ENCODE measurements at regions of chr16 and their contacts with region 1.

Region 1: DNA sequence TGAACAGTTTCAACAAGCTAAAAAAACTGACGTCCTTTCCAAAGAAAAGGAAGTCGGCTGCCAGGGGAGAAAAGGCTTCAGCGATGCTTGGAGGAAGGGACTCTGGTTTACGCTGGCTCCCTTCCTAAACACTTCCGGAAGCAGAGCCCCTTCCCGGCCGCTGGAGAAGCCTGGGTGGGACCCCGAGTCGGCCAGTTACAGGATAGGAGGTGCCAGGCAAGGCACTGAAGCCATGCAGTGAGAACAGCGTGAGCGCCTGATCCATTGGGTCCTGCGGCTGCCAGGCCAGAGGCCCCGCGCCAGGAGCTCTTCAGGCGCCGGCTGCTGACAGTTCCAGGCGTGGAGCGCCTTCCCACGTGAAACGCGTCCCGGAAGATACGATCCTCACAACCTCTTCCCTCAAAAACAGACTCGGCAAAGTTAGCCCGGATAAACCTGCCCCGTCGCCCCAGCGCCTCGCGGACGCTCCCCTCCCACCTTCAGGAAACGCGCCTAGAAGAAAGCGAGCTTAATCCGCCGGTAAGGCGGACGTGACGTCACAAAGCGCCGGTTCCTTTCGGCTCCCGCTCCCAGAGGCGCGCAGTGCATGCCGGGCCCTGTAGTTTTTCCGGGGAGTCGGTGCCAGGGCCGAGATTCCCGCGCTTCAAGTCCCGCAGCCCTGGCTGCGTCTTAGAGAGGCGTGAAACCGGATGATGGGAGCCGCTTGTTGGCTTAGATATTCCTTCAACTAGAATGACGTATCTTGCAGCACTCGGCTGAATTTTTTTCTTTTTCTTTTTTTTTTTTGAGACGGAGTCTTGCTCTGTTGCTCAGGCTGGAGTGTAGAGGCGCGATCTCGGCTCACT is at the start of gene ADAT1:
- DNase-seq: peak; percentile 99
- H3K4me3 Mint-ChIP-seq: peak within 1 kb of the TSS; percentile 92
- H3K27ac Mint-ChIP-seq: peak within 1 kb of the TSS; percentile 94
- H3K4me1 Mint-ChIP-seq: peaks cover 69% of the 10 kb centered on the region
- H3K27me3 Mint-ChIP-seq: no peaks in the 10 kb centered on the region
- total RNA-seq, gene ADAT1: 50.7 to 56.0 TPM

Region 2: GRCh38 chr16:75464130-75464918 is 158.7 kb before region 1 on chr16 and contains the start of gene TMEM170A:
- CTCF ChIA-PET with region 1: interaction called, 10 read pairs
- POLR2A ChIA-PET with region 1: interaction called, 10 read pairs
- DNase-seq: peak; percentile 99
- H3K4me3 Mint-ChIP-seq: peak within 1 kb of the TSS; percentile 90
- H3K27ac Mint-ChIP-seq: peak within 1 kb of the TSS; percentile 92
- H3K4me1 Mint-ChIP-seq: peaks cover 42% of the 10 kb centered on the region
- H3K27me3 Mint-ChIP-seq: no peaks in the 10 kb centered on the region
- total RNA-seq, gene TMEM170A: 30.8 to 33.9 TPM

Region 3: GRCh38 chr16:75555707-75556430 is 67.1 kb before region 1 on chr16 and contains the start of gene TMEM231:
- CTCF ChIA-PET with region 1: interaction called, 4 read pairs
- POLR2A ChIA-PET with region 1: interaction called, 20 read pairs
- DNase-seq: peak; percentile 98
- H3K4me3 Mint-ChIP-seq: peak within 1 kb of the TSS; percentile 86
- H3K27ac Mint-ChIP-seq: peak within 1 kb of the TSS; percentile 71
- H3K4me1 Mint-ChIP-seq: peaks cover 23% of the 10 kb centered on the region
- H3K27me3 Mint-ChIP-seq: peaks cover 5% of the 10 kb centered on the region
- total RNA-seq, gene TMEM231: 1.9 to 2.0 TPM

Region 4: DNA sequence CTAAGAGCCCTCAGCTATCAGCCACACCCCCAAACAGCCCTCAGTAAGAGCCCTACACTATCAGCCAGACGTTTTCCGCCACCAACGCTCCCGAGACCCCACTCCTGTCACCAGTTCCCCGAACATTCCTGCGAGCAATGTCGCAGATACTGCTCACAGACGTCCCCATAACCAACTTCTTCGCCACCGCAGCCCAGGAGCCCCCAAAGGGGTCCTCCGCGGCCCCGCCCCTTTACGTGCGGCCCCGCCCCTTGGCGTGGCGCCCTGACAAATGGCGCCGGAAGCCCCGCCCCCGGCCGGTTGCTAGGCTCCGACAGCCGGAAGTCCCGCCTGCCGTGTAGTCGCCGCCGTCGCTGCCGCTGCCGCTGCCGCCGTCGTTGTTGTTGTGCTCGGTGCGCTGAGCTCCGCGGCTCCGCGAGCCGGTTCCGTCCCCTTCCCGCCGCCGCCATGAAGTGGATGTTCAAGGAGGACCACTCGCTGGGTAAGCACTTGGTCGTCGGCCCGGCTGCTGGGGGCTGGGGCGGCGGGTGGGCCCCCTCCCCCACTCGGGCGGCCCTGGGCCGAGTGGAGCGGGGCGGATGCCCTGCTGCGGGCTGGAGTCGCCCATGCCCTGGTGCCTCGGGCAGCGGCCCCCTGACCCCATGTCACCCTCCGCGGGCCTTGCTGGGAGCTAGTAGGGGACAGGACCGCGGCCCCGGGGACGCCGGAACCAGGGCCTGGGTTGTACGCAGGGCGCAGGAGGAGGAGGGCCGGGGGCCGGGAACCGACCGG is 56.8 kb before region 1 on chr16 and contains the start of gene GABARAPL2:
- CTCF ChIA-PET with region 1: interaction called, 20 read pairs
- POLR2A ChIA-PET with region 1: interaction called, 42 read pairs
- DNase-seq: peak; percentile 92
- H3K4me3 Mint-ChIP-seq: peak within 1 kb of the TSS; percentile 100
- H3K27ac Mint-ChIP-seq: peak within 1 kb of the TSS; percentile 87
- H3K4me1 Mint-ChIP-seq: peaks cover 38% of the 10 kb centered on the region
- H3K27me3 Mint-ChIP-seq: peaks cover 14% of the 10 kb centered on the region
- total RNA-seq, gene GABARAPL2: 84.9 to 86.2 TPM

Region 5: GRCh38 chr16:75640598-75640997 is 17.6 kb after region 1 on chr16:
- CTCF ChIA-PET with region 1: interaction called, 5 read pairs
- POLR2A ChIA-PET with region 1: interaction called, 184 read pairs
- DNase-seq: no peak
- H3K4me3 Mint-ChIP-seq: no peak overlapping the region
- H3K27ac Mint-ChIP-seq: no peak overlapping the region
- H3K4me1 Mint-ChIP-seq: peaks cover 37% of the 10 kb centered on the region
- H3K27me3 Mint-ChIP-seq: no peaks in the 10 kb centered on the region

Measured in activated CD4-positive, alpha-beta memory T cell treated with anti-CD3 and anti-CD28 coated beads, Interleukin-2, amount 10 ng/mL, durations not matched to agents 7 days and 5 days (primary cell).